Adrenal gland (tissue), 19 donors: ENCODE measurements at regions of chr16 and their contacts with region 1.

Region 1: DNA sequence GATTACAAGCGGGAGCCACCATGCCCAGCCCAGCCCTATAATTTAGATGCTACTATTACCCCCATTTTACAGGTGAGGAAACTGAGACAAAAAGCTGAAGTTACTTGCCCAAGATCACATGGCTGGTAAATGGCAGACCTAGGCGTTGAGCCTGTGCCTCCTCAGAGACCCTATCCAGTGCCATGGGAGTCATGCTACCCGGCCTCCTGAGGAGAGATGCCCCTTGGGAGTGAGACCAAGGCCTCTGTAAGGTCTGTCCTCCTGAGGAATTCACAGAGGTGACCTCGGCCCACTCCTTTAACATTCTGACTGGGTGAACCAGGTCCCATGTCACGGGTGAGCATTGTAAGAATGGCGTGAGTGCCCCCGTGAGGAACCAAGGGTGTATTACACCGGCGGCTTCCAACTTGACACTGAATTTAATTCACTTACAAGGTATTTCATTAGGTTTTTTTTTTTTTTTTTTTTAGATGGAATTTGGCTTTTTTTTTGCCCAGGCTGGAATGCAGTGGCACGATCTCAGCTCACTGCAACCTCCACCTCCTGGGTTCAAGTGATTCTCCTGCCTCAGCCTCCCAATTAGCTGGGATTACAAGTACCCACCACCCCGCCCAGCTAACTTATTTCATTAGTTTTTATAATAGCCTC is 95.7 kb downstream of the ABCC6 start:
- DNase-seq: peak; percentile 58 to 90 (median 80)
- H3K4me3 ChIP-seq: no peak overlapping the region
- H3K27ac ChIP-seq: no peak overlapping the region
- H3K4me1 ChIP-seq: no peaks in the 10 kb centered on the region
- H3K27me3 ChIP-seq: no peaks in the 10 kb centered on the region
- CTCF ChIP-seq: peak; percentile 87 to 97 (median 90)
- POLR2A ChIP-seq: no peak

Region 2: GRCh38 chr16:15874745-15875314 is 252.8 kb before region 1 on chr16:
- intact Hi-C with region 1: loop called (anchors 5 to 10 kb)
- DNase-seq: peak; percentile 54 to 86 (median 68)
- H3K4me3 ChIP-seq: no peak overlapping the region
- H3K27ac ChIP-seq: peak overlapping the region in 3 of 5 donors; percentile 41 to 65 (median 43)
- H3K4me1 ChIP-seq: peaks cover 16 to 18% of the 10 kb centered on the region in 2 donors
- H3K27me3 ChIP-seq: no peaks in the 10 kb centered on the region
- CTCF ChIP-seq: peak; percentile 56 to 74 (median 70)
- POLR2A ChIP-seq: no peak

Region 3: DNA sequence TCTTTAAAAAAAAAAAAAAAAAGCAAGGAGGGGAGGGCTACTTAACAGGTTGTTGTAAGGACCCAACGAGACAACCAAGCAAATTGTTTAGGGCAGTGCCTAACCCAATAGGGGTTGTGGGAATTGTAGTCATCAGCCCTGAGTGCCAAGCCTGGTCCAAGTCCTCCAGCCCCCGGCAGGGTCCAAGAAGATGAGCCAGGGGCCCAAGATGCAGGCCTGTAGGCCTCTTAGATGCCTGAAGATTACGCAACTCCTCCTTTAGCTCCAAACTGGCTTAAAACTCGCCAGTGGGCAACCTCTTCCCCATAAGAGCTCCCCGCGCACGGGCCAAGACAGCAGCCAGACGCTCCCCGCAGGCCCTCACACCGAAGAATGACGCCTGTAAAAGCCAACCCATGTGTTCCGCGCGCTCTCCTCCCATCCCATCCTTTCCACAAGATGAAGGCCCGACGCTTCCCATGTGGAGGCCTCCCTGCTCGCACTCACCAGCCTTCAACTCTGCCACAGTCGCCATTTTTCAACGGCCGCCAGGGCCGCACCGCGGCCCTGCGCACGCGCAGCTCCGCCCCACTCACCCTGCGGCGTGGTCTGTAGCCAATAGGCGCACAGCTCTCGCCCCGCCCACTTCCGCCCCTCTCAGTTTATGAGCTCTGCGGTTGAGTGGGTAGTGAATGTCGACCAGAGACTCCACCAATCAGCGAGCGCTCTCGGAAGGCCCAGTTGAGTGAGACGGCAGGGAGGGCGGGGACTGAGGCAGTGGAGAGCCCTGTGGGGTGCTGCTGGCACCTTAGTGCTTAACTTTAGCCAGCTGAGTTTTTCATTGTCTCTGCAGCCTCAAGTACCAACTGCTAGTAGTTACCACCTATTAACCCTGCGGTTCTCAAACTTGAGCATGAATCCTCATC is 239.3 kb before region 1 on chr16 and contains the start of gene CEP20:
- intact Hi-C with region 1: loop called in 1 of 2 experiments (anchors 10 kb)
- DNase-seq: peak; percentile 99 to 100 (median 100)
- H3K4me3 ChIP-seq: peak within 1 kb of the TSS; percentile 38 to 97 (median 89)
- H3K27ac ChIP-seq: peak within 1 kb of the TSS in 4 of 5 donors; percentile 82 to 92 (median 88)
- H3K4me1 ChIP-seq: peaks cover 16 to 27% of the 10 kb centered on the region in 2 donors
- H3K27me3 ChIP-seq: no peaks in the 10 kb centered on the region
- CTCF ChIP-seq: peak in 5 of 6 experiments; percentile 29 to 66 (median 31)
- POLR2A ChIP-seq: peak; percentile 69 to 75
- total RNA-seq, gene CEP20: 27.2 to 46.0 (median 34.7) TPM